ENCODE measurements at regions of chr9 and their contacts with region 1.

Region 1: GRCh38 chr9:34154057-34154456 is 24.8 kb upstream of the UBAP1 start:
- DNase-seq: no peak
- ATAC-seq: no peak
- H3K4me3 ChIP-seq: no peak overlapping the region
- H3K27ac ChIP-seq: no peak overlapping the region
- H3K4me1 ChIP-seq: no peaks in the 10 kb centered on the region
- H3K27me3 ChIP-seq: no peaks in the 10 kb centered on the region
- CTCF ChIP-seq: no peak
- EP300 ChIP-seq: no peak
- POLR2A ChIP-seq: no peak
- RAD21 ChIP-seq: no peak

Region 2: DNA sequence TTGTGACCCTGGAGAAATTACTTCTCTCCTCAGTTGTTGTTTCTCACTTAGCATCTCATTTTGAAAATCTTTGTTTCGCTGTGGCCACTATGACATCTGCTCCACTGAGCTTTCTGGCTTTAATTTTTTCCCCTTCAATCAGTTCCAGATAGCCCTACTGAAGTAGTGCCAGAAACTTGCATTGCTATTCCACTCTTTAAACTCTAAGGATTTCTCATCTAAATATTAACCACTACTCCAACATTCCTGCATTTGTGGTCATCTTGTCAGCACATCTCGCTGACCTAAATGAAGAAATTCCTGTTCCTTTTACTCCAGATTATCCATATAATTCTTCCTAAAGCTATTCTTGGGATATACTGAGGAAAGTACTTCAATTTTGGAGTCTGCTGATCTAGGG is 665.0 kb before region 1 on chr9:
- CTCF ChIA-PET with region 1: no interaction called
- POLR2A ChIA-PET with region 1: no interaction called
- RAD21 ChIA-PET with region 1: no interaction called
- SMC1A ChIA-PET with region 1: no interaction called
- in situ Hi-C with region 1: no loop called
- intact Hi-C with region 1: no loop called
- DNase-seq: no peak
- ATAC-seq: no peak
- H3K4me3 ChIP-seq: no peak overlapping the region
- H3K27ac ChIP-seq: no peak overlapping the region
- H3K4me1 ChIP-seq: no peaks in the 10 kb centered on the region
- H3K27me3 ChIP-seq: peaks cover 0 to 2% of the 10 kb centered on the region in 2 experiments; a peak in 1 of 4 replicates
- CTCF ChIP-seq: no peak
- EP300 ChIP-seq: no peak
- POLR2A ChIP-seq: no peak
- RAD21 ChIP-seq: no peak

Region 3: GRCh38 chr9:34098307-34098706 is 55.8 kb before region 1 on chr9:
- CTCF ChIA-PET with region 1: no interaction called
- POLR2A ChIA-PET with region 1: interaction called, 6 read pairs
- RAD21 ChIA-PET with region 1: no interaction called
- SMC1A ChIA-PET with region 1: no interaction called
- in situ Hi-C with region 1: loop called (anchors 5 kb)
- intact Hi-C with region 1: no loop called
- DNase-seq: peak; percentile 27
- ATAC-seq: peak; percentile 61
- H3K4me3 ChIP-seq: no peak overlapping the region
- H3K27ac ChIP-seq: peak overlapping the region; percentile 57
- H3K4me1 ChIP-seq: peaks cover 17% of the 10 kb centered on the region
- H3K27me3 ChIP-seq: no peaks in the 10 kb centered on the region
- CTCF ChIP-seq: no peak
- EP300 ChIP-seq: no peak
- POLR2A ChIP-seq: no peak
- RAD21 ChIP-seq: no peak

Measured in GM12878 (cell line).